ENCODE measurements at regions of chr17 and their contacts with region 1.

Region 1: DNA sequence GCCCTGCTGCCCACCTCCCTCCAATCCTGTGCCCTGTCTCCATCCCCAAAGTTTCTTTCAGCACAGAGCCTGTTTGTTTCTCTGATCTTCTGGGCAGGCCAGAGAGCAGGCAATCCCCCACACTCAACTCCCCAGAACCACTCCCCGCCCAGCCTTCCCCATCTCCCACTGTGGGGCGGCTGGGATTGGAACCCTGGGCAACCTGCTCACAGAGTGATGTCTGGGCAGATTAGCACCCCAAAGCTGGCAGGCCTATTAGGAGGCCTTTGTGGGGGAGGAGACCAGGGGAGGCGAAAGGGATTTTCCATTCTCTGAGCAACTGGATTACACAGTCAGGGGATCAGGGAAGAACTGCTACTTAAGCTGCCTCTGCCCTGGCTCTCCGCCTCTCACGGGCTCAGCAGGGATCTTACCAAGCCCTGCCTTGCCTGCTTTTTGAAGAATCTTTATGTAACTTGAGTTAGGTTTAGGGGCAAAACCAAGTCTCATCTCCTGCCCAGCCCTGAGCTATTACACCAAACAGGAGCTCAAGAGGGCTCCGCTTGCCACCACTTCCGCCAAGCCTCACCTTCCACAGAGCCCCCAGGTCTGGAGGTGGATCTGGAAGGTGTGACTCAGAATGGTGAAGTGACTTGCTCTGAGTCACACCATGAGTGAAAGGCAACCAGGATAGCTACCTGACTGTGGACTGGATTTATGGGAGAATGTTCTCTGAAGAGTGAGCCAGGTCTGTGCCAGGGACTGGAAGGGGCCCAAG is 16.0 kb upstream of the LHX1 start:
- DNase-seq: no peak
- H3K4me3 Mint-ChIP-seq: peak overlapping the region; percentile 27
- H3K27ac Mint-ChIP-seq: peak overlapping the region; percentile 70
- H3K4me1 Mint-ChIP-seq: peaks cover 24% of the 10 kb centered on the region
- H3K27me3 Mint-ChIP-seq: peaks cover 17% of the 10 kb centered on the region

Region 2: DNA sequence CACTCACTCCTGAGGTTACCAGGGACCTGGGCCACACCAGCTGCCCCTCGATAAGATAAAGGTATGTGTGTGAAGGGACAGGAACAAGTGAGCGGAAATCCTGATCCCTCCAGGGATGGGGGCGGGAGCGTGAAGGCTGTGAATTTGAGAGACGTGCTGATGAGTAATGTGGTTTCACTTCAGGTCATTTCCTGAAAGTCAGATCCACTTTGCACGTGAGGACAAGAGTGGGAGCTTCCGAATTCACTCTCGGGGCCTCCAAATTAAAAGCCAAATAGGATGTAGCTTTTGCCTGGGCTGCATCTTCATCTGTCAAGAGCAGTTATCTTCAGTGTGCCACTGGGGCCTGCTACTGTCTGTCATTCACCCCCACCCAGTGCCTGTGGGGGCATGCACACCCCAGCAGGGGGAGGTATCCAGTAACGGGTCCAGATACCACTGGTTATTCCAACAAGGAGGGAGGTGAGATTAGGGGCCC is 71.4 kb before region 1 on chr17:
- intact Hi-C with region 1: loop called (anchors 2 kb)
- DNase-seq: peak; percentile 4
- H3K4me3 Mint-ChIP-seq: no peak overlapping the region
- H3K27ac Mint-ChIP-seq: no peak overlapping the region
- H3K4me1 Mint-ChIP-seq: peaks cover 20% of the 10 kb centered on the region
- H3K27me3 Mint-ChIP-seq: peaks cover 10% of the 10 kb centered on the region